CD8-positive, alpha-beta T cell (primary cell): ENCODE measurements at regions of chr19 and their contacts with region 1.

Region 1: DNA sequence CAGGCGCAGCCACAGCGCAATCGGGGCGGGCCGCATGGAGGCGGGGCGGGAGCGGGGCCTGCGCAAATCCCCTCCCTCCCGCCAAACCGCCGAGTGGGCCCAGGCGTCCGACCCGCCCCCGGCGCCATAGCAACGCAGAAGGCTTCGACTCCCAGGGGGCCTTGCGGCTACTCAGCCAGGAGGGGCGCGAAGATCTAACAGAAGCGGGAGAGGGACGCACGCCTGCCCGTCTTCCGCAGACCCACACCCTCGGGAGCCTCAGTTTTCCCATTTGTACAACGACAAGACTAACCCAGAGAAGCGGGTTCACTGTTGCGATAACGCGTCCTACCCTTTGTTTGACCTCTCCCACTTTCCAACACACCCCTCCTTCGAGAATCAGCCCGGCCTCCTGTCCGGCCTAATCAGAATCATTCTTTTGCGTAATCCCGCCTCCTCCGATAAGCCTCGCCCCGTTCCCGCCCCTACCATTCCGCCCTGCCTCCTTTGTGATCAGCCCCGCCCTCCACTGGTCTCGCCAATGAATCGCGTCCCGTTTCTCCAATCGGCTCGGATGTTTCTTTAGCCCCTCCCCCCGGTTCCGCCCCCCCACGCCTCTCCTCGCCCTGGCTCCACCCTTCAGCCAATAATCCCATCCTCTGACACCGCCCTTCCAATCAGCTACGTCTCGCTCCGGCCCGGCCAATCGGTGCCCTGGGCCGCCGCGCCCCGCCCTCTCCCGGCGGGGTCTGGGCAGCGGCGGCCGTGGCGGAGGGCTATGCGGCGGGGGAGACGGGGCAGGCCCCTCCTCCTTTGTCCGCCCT is at the start of gene PCSK4:
- DNase-seq: peak; percentile 95 to 99 (median 97)
- ATAC-seq: peak; percentile 88
- H3K4me3 ChIP-seq: peak within 1 kb of the TSS; percentile 59 to 71
- H3K4me3 Mint-ChIP-seq: peak within 1 kb of the TSS; percentile 90
- H3K27ac ChIP-seq: peak within 1 kb of the TSS; percentile 35 to 57
- H3K27ac Mint-ChIP-seq: peak within 1 kb of the TSS; percentile 90
- H3K4me1 ChIP-seq: peaks cover 15% of the 10 kb centered on the region
- H3K4me1 Mint-ChIP-seq: peaks cover 16% of the 10 kb centered on the region
- H3K27me3 ChIP-seq: no peaks in the 10 kb centered on the region
- H3K27me3 Mint-ChIP-seq: no peaks in the 10 kb centered on the region
- CTCF ChIP-seq: no peak
- total RNA-seq, gene PCSK4: 5.4 to 6.1 TPM

Region 2: GRCh38 chr19:1438035-1438932 is 52.2 kb before region 1 on chr19 and contains the start of gene RPS15:
- CTCF ChIA-PET with region 1: no interaction called
- POLR2A ChIA-PET with region 1: no interaction called
- intact Hi-C with region 1: loop called in 1 of 2 experiments (anchors 1 kb)
- DNase-seq: peak; percentile 92 to 98 (median 96)
- ATAC-seq: peak; percentile 90
- H3K4me3 ChIP-seq: peak within 1 kb of the TSS; percentile 79 to 95
- H3K4me3 Mint-ChIP-seq: peak within 1 kb of the TSS; percentile 98
- H3K27ac ChIP-seq: peak within 1 kb of the TSS; percentile 82 to 93
- H3K27ac Mint-ChIP-seq: peak within 1 kb of the TSS; percentile 100
- H3K4me1 ChIP-seq: peaks cover 22% of the 10 kb centered on the region
- H3K4me1 Mint-ChIP-seq: peaks cover 21% of the 10 kb centered on the region
- H3K27me3 ChIP-seq: no peaks in the 10 kb centered on the region
- H3K27me3 Mint-ChIP-seq: no peaks in the 10 kb centered on the region
- CTCF ChIP-seq: peak; percentile 95
- total RNA-seq, gene RPS15: 2,066 to 2,071 TPM

Region 3: GRCh38 chr19:1470203-1471009 is 20.1 kb before region 1 on chr19:
- CTCF ChIA-PET with region 1: interaction called, 3 read pairs
- POLR2A ChIA-PET with region 1: no interaction called
- intact Hi-C with region 1: loop called in 1 of 2 experiments (anchors 2 kb)
- DNase-seq: peak; percentile 38 to 83 (median 71)
- ATAC-seq: peak; percentile 76
- H3K4me3 ChIP-seq: peak overlapping the region; percentile 51 to 58
- H3K4me3 Mint-ChIP-seq: peak overlapping the region; percentile 74
- H3K27ac ChIP-seq: no peak overlapping the region
- H3K27ac Mint-ChIP-seq: no peak overlapping the region
- H3K4me1 ChIP-seq: peaks cover 54% of the 10 kb centered on the region
- H3K4me1 Mint-ChIP-seq: peaks cover 14% of the 10 kb centered on the region
- H3K27me3 ChIP-seq: peaks cover 21 to 22% of the 10 kb centered on the region in 2 experiments
- H3K27me3 Mint-ChIP-seq: peaks cover 2% of the 10 kb centered on the region
- CTCF ChIP-seq: no peak

Region 4: DNA sequence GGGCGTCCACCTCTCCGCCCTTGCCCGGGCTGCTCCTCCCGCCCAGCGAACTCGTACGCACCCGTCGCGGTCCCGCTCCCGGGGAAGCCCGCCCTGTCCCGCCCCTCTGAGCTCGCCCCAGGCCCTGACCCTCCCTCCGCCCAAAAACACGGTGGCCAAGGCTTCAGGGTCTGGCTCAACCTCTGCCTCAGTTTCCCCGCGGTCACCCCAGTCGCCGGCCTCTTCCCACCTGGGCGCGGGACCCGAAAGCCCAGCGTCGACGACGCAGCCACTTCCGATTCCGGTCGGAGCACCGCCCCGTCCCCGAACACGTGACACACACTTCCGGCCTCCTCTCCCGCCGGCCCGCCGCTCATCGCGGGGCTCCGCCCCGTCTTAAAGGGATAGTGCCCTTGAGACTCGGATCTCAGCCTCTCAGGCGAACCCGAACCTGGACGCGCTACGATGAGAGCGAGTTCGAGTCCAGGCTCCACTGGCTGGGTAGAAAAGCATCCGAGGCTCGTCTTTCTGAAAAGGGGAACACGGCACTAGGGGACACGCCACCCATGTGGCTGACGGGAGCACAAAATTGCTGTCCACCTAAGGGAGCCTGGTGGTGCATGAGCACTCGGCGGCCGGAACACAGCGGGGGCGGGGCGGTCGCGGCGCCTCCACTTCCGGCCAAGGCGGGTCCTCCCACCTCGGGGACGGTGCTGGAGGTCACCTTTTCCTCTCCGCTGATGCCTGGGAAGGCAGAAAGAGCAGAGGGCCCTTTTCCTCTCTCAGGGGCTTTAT is 11.4 kb before region 1 on chr19 and contains the start of gene C19orf25:
- CTCF ChIA-PET with region 1: interaction called, 3 read pairs
- POLR2A ChIA-PET with region 1: interaction called, 4 read pairs
- intact Hi-C with region 1: loop called (anchors 1 kb)
- DNase-seq: peak; percentile 81 to 94 (median 89)
- ATAC-seq: peak; percentile 91
- H3K4me3 ChIP-seq: peak within 1 kb of the TSS; percentile 68 to 86
- H3K4me3 Mint-ChIP-seq: peak within 1 kb of the TSS; percentile 99
- H3K27ac ChIP-seq: peak within 1 kb of the TSS; percentile 65 to 76
- H3K27ac Mint-ChIP-seq: peak within 1 kb of the TSS; percentile 98
- H3K4me1 ChIP-seq: peaks cover 12% of the 10 kb centered on the region
- H3K4me1 Mint-ChIP-seq: peaks cover 19% of the 10 kb centered on the region
- H3K27me3 ChIP-seq: no peaks in the 10 kb centered on the region
- H3K27me3 Mint-ChIP-seq: no peaks in the 10 kb centered on the region
- CTCF ChIP-seq: no peak
- total RNA-seq, gene C19orf25: 11.9 to 12.1 TPM

Region 5: DNA sequence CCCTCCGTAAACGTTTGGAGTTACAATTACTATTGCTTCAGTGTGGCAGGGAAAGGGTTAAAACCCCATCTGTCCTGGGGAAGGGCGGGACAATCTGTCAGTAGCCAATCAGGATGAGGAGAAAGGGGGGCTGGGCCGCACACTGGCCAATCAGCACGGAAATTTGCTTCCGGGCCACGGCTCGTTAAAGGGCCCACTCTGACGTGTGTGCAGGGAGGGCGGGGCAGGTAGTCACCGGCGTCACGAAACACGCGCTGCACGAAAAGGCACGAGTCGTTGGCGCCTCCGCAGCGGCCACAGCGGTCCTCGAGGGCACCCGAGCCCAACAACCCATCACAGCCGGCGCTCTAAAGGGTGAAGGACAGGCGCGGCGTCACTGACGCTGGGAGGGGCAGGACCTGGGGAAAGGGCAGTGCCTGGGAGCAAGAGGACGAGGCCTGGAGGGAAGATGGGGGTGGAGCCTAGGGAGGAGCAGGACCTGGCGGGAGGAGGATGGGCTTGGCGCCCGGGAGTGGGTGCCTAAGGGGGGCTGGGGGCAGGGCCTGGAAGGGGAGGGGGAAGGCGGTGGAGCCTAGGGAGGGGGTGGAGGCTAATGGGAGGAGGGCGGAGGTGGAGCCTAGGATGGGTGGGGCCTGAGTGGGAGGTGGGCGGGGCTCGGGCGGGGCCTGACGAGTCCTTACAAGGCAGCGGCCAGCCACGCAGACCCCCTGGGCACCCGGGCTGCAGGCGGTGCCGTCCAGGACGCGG is 17.4 kb after region 1 on chr19:
- CTCF ChIA-PET with region 1: interaction called, 3 read pairs
- POLR2A ChIA-PET with region 1: no interaction called
- intact Hi-C with region 1: loop called (anchors 1 kb)
- DNase-seq: peak; percentile 80 to 96 (median 92)
- ATAC-seq: peak; percentile 93
- H3K4me3 ChIP-seq: peak overlapping the region; percentile 44 to 54
- H3K4me3 Mint-ChIP-seq: peak overlapping the region; percentile 75
- H3K27ac ChIP-seq: peak overlapping the region; percentile 47 to 64
- H3K27ac Mint-ChIP-seq: peak overlapping the region; percentile 88
- H3K4me1 ChIP-seq: peaks cover 40% of the 10 kb centered on the region
- H3K4me1 Mint-ChIP-seq: peaks cover 22% of the 10 kb centered on the region
- H3K27me3 ChIP-seq: peaks cover 8 to 10% of the 10 kb centered on the region in 2 experiments
- H3K27me3 Mint-ChIP-seq: peaks cover 17% of the 10 kb centered on the region
- CTCF ChIP-seq: no peak

Region 6: DNA sequence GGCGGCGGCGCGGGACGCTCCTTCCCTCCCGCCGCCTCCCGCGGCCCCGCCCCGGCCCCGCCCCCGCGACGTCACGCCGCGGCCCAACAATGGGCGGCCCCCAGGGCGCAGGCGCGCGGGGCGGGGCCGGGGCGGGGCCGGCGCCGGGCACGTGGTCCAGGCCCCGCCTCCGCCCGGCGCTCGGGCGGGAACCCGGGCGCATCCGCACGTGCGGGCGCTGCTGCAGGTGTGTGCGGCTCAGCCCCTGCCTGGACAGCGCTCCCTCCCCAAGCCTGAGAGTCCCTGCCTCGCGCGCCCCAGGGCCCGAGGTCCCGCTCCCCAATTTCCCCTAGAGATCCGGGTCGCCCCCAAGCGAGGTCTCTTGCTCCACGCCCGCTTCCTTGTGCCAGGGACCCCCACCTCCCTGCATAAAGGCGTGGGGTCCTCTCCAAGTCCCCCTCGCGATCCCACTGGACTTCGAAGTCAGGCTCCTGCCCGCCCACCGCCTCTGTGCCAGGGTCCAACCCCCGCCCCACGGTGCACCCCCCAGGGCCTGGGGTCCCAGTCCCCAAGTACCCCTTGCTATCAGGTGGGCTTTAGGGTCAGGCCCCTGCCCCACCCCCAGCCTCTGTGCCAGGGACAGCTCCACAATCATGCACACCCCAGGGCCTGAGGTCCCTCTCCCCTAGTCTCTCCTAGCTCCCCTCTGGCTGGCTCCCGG is 78.0 kb after region 1 on chr19 and contains the start of gene MEX3D:
- CTCF ChIA-PET with region 1: no interaction called
- POLR2A ChIA-PET with region 1: no interaction called
- intact Hi-C with region 1: loop called in 1 of 2 experiments (anchors 1 kb)
- DNase-seq: peak; percentile 54 to 91 (median 83)
- ATAC-seq: peak; percentile 95
- H3K4me3 ChIP-seq: peak within 1 kb of the TSS; percentile 16 to 39
- H3K4me3 Mint-ChIP-seq: peak within 1 kb of the TSS; percentile 57
- H3K27ac ChIP-seq: no peak within 1 kb of the TSS
- H3K27ac Mint-ChIP-seq: no peak within 1 kb of the TSS
- H3K4me1 ChIP-seq: peaks cover 8% of the 10 kb centered on the region
- H3K4me1 Mint-ChIP-seq: peaks cover 4% of the 10 kb centered on the region
- H3K27me3 ChIP-seq: peaks cover 0 to 2% of the 10 kb centered on the region in 2 experiments
- H3K27me3 Mint-ChIP-seq: no peaks in the 10 kb centered on the region
- CTCF ChIP-seq: no peak
- total RNA-seq, gene MEX3D: 1.5 to 1.7 TPM